ENCODE measurements at regions of chr1 and their contacts with region 1.

Region 1: GRCh38 chr1:110407260-110408210 is at the start of gene LAMTOR5:
- DNase-seq: peak; percentile 86 to 97 (median 93)

Region 2: GRCh38 chr1:110338886-110339406 is 68.6 kb before region 1 on chr1 and contains the start of gene RBM15:
- intact Hi-C with region 1: loop called (anchors 5 kb)
- DNase-seq: peak; percentile 92 to 100 (median 98)

Region 3: DNA sequence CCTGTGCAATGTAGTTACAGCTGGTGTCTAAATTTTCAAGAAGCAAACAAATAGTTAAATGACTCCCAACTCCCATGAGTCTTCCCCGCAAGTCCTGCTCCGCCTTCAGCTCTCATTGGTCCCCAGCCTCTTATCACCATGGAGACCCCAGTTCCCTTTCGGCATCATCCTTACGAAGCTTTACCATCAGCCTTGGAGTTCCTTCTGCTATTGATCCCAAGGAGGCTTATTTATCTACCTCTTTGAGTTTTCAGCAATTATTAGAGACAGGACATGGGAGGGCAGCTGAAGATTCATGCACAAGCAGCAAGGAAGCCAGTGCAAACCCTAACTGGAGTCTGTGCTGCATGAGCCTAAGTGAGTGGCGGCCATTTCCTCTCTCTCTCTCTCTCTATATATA is 186.4 kb after region 1 on chr1:
- intact Hi-C with region 1: no loop called
- DNase-seq: peak in 4 of 42 donors; percentile 9 to 38 (median 25)

Measured in head of caudate nucleus (tissue), 42 donors.